ENCODE measurements at regions of chr20 and their contacts with region 1.

Region 1: DNA sequence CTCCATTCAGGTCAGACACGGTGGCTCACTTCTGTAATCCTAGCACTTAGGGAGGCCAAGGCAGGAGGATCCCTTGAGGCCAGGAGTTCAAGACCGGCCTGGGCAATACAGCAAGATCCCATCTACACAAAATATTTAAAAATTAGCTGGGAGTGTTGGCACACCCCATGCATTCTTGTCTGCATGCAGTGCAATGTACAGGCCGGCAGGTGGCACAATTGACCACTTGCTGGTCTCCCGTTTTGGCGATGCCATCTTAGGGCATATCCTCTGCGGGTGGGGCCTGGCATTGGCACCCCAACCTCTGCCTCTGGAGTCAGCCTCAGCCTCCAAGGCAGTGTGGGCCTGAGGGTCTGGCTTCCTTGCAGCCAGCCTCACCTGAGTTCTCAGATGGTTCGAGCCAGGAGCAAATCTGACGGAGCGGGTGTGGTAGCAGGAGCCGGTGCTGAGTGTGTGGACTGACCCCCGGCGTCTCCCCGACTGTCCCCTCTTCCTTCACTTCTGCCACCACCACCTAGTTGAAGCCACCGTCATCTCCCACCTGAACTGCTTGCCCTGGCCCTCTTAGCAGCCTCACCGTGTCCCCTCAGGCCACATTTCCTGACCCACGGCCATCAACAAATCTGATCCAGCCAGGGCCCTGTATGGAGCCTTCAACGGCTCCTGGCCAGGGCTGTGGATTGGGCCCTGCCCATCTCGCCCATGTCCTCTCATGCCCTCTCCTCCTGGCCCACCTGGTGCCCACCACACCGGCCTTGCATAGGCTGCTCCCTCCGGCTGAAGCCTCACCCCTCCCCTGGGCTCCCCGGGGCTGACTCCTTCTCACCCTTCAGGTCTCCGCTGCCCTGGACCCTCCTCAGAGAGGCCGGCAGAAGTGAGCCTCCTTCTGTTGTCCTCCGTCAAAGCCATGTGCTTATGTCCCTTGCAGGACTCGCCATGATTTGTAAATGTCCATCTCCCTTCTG is 44.0 kb downstream of the EFCAB8 start:
- DNase-seq: peak; percentile 51
- ATAC-seq: peak; percentile 88
- H3K4me3 Mint-ChIP-seq: no peak overlapping the region
- H3K27ac Mint-ChIP-seq: no peak overlapping the region
- H3K4me1 Mint-ChIP-seq: no peaks in the 10 kb centered on the region
- H3K27me3 Mint-ChIP-seq: no peaks in the 10 kb centered on the region
- CTCF ChIP-seq: peak; percentile 77

Region 2: GRCh38 chr20:32972181-32973076 is 69.7 kb after region 1 on chr20:
- CTCF ChIA-PET with region 1: interaction called, 3 read pairs
- POLR2A ChIA-PET with region 1: no interaction called
- intact Hi-C with region 1: loop called (anchors 1 kb)
- DNase-seq: peak; percentile 57
- ATAC-seq: peak; percentile 94
- H3K4me3 Mint-ChIP-seq: no peak overlapping the region
- H3K27ac Mint-ChIP-seq: no peak overlapping the region
- H3K4me1 Mint-ChIP-seq: peaks cover 19% of the 10 kb centered on the region
- H3K27me3 Mint-ChIP-seq: no peaks in the 10 kb centered on the region
- CTCF ChIP-seq: no peak

Region 3: GRCh38 chr20:33076662-33077372 is 174.1 kb after region 1 on chr20:
- CTCF ChIA-PET with region 1: interaction called, 17 read pairs
- POLR2A ChIA-PET with region 1: no interaction called
- intact Hi-C with region 1: loop called (anchors 1 kb)
- DNase-seq: no peak
- ATAC-seq: peak; percentile 45
- H3K4me3 Mint-ChIP-seq: no peak overlapping the region
- H3K27ac Mint-ChIP-seq: no peak overlapping the region
- H3K4me1 Mint-ChIP-seq: no peaks in the 10 kb centered on the region
- H3K27me3 Mint-ChIP-seq: peaks cover 3% of the 10 kb centered on the region
- CTCF ChIP-seq: no peak

Region 4: DNA sequence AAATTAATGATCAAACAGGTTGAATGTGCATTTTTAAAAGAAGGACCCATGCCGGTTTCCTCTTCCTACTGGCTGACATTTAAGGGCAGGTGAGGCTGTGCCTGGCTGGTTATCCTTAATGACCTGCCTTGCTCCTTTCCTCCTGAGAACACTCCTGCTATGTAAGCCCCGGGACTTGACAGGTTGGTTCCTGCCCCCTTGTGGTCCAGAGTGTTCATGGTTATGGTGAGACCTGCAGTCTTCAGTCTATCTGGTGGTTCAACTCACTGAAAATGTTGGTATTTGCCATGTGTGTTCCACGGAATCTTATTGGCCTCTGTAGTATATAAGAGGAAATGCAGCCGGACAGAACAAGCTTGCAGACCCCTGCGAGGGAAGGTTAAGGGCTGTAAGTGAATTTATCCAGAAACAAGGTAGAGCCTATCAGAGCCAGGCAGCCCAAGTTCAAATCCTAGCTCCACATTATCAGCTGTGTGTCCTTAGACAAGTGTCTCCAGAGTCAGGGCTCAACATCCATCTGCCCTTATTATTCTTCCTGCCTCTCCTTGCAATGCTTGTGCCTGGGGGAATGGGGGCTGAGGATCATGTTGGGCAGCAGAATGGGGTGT is 309.2 kb after region 1 on chr20:
- CTCF ChIA-PET with region 1: interaction called, 6 read pairs
- POLR2A ChIA-PET with region 1: no interaction called
- intact Hi-C with region 1: loop called (anchors 1 kb)
- DNase-seq: no peak
- ATAC-seq: no peak
- H3K4me3 Mint-ChIP-seq: no peak overlapping the region
- H3K27ac Mint-ChIP-seq: no peak overlapping the region
- H3K4me1 Mint-ChIP-seq: no peaks in the 10 kb centered on the region
- H3K27me3 Mint-ChIP-seq: peaks cover 51% of the 10 kb centered on the region
- CTCF ChIP-seq: no peak

Region 5: GRCh38 chr20:33299111-33299603 is 396.4 kb after region 1 on chr20:
- CTCF ChIA-PET with region 1: interaction called, 8 read pairs
- POLR2A ChIA-PET with region 1: no interaction called
- intact Hi-C with region 1: loop called (anchors 1 kb)
- DNase-seq: peak; percentile 69
- ATAC-seq: peak; percentile 75
- H3K4me3 Mint-ChIP-seq: no peak overlapping the region
- H3K27ac Mint-ChIP-seq: no peak overlapping the region
- H3K4me1 Mint-ChIP-seq: no peaks in the 10 kb centered on the region
- H3K27me3 Mint-ChIP-seq: peaks cover 13% of the 10 kb centered on the region
- CTCF ChIP-seq: peak; percentile 95